ENCODE measurements at regions of chr22 and their contacts with region 1.

Region 1: GRCh38 chr22:17950651-17951214 is 73.6 kb downstream of the MICAL3 start:
- DNase-seq: peak; percentile 38 to 65
- H3K4me3 ChIP-seq: no peak overlapping the region
- H3K27ac ChIP-seq: peak overlapping the region; percentile 38 to 39
- H3K4me1 ChIP-seq: peaks cover 0 to 59% (median 29%) of the 10 kb centered on the region in 4 donors
- H3K27me3 ChIP-seq: no peaks in the 10 kb centered on the region
- CTCF ChIP-seq: no peak

Region 2: GRCh38 chr22:17988800-17989513 is 38.2 kb after region 1 on chr22:
- intact Hi-C with region 1: loop called (anchors 5 kb)
- DNase-seq: no peak
- H3K4me3 ChIP-seq: no peak overlapping the region
- H3K27ac ChIP-seq: no peak overlapping the region
- H3K4me1 ChIP-seq: peaks cover 0 to 85% (median 32%) of the 10 kb centered on the region in 4 donors
- H3K27me3 ChIP-seq: no peaks in the 10 kb centered on the region
- CTCF ChIP-seq: no peak

Region 3: GRCh38 chr22:18044548-18045271 is 94.0 kb after region 1 on chr22:
- intact Hi-C with region 1: no loop called
- DNase-seq: peak in 1 of 2 donors; percentile 82
- H3K4me3 ChIP-seq: no peak overlapping the region
- H3K27ac ChIP-seq: peak overlapping the region; percentile 82 to 87
- H3K4me1 ChIP-seq: peaks cover 0 to 38% (median 22%) of the 10 kb centered on the region in 4 donors
- H3K27me3 ChIP-seq: no peaks in the 10 kb centered on the region
- CTCF ChIP-seq: no peak